ENCODE measurements at regions of chr5 and their contacts with region 1.

Region 1: GRCh38 chr5:7754992-7755596 is 95.8 kb downstream of the CFAP90 start:
- DNase-seq: peak; percentile 60
- H3K4me3 Mint-ChIP-seq: no peak overlapping the region
- H3K27ac Mint-ChIP-seq: no peak overlapping the region
- H3K4me1 Mint-ChIP-seq: no peaks in the 10 kb centered on the region
- H3K27me3 Mint-ChIP-seq: peaks cover 44% of the 10 kb centered on the region

Region 2: GRCh38 chr5:7078901-7079300 is 676.2 kb before region 1 on chr5:
- CTCF ChIA-PET with region 1: no interaction called
- intact Hi-C with region 1: loop called (anchors 10 kb)
- DNase-seq: peak; percentile 11
- H3K4me3 Mint-ChIP-seq: no peak overlapping the region
- H3K27ac Mint-ChIP-seq: no peak overlapping the region
- H3K4me1 Mint-ChIP-seq: no peaks in the 10 kb centered on the region
- H3K27me3 Mint-ChIP-seq: peaks cover 9% of the 10 kb centered on the region

Region 3: GRCh38 chr5:7261049-7261448 is 494.0 kb before region 1 on chr5:
- CTCF ChIA-PET with region 1: interaction called, 4 read pairs
- intact Hi-C with region 1: loop called (anchors 2 kb)
- DNase-seq: no peak
- H3K4me3 Mint-ChIP-seq: no peak overlapping the region
- H3K27ac Mint-ChIP-seq: no peak overlapping the region
- H3K4me1 Mint-ChIP-seq: no peaks in the 10 kb centered on the region
- H3K27me3 Mint-ChIP-seq: peaks cover 2% of the 10 kb centered on the region

Region 4: DNA sequence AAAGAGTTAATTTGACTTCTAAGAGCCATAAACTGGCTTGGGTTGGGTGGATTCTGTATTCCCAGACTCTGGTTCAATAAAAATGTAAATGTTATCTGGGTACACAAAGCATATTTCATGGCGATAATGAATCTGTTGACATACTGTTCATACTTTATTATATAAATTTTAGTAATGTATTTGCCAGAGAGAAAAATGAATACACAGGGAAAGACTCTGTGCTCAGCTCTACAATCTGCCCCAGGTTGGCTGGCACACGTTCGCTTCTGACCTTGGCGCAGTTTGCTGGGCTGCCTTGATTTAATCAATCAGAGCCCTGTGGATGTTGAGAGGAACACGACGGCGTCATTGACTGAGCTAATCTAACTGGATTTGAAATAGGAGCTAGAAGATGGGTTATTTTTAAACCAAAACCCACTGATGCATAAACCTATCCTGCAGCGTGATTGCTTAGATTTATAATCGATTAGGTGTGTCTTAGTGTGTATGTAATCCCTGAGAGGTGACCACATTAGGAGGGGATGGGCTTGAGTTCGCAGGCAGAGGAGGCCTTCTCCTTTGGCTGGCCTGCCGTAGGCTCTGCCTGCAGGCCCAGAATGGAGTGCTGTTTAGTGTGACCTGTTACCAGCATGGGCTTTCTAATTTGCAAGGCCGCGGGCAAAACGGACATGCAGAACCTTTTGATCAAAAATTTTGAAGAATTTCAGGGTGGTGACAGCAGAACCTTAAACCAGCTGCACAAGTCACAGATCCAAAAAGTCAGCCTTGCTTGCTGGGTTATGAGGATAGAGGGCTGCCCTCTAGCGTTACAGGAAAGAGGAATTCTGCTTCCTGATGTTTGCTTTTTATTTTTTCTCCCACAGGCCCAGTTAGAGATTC is 363.0 kb before region 1 on chr5:
- CTCF ChIA-PET with region 1: no interaction called
- intact Hi-C with region 1: loop called (anchors 10 kb)
- DNase-seq: no peak
- H3K4me3 Mint-ChIP-seq: no peak overlapping the region
- H3K27ac Mint-ChIP-seq: no peak overlapping the region
- H3K4me1 Mint-ChIP-seq: peaks cover 5% of the 10 kb centered on the region
- H3K27me3 Mint-ChIP-seq: peaks cover 23% of the 10 kb centered on the region

Region 5: GRCh38 chr5:7815892-7816534 is 60.9 kb after region 1 on chr5:
- CTCF ChIA-PET with region 1: interaction called, 4 read pairs
- intact Hi-C with region 1: loop called (anchors 5 kb)
- DNase-seq: peak; percentile 75
- H3K4me3 Mint-ChIP-seq: no peak overlapping the region
- H3K27ac Mint-ChIP-seq: no peak overlapping the region
- H3K4me1 Mint-ChIP-seq: peaks cover 4% of the 10 kb centered on the region
- H3K27me3 Mint-ChIP-seq: peaks cover 49% of the 10 kb centered on the region

Region 6: GRCh38 chr5:7856855-7857254 is 101.8 kb after region 1 on chr5:
- CTCF ChIA-PET with region 1: no interaction called
- intact Hi-C with region 1: loop called (anchors 2 kb)
- DNase-seq: peak; percentile 55
- H3K4me3 Mint-ChIP-seq: no peak overlapping the region
- H3K27ac Mint-ChIP-seq: no peak overlapping the region
- H3K4me1 Mint-ChIP-seq: peaks cover 23% of the 10 kb centered on the region
- H3K27me3 Mint-ChIP-seq: no peaks in the 10 kb centered on the region